ENCODE measurements at regions of chr6 and their contacts with region 1.

Region 1: DNA sequence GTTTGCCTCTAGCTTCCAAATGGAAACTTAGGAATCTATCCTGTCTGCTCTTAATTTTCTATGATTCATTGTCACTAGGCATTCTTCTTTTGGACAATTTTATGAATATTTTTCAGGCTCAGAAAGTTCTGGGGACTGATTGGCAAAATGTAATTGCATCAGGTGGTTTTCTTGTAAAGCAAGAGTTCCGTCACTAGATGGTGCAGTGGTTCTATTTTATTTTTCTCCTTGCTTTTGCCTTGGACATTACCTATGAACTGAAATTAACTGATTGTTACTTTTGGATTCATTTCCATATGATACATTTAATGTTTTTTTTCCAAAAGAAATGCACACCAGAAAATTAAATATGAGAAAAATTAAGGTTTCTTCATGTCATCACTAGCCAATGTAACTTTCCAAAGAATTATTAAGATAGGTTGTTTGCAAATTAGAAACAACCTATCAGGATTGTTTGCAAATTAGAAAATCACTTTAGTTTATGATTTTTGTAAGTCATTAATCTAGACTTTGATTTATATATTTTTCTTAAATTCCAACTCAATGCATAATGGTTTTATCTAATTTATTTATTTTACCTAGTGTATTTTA is 48.0 kb downstream of the TMEM170B start:
- DNase-seq: no peak
- H3K4me3 ChIP-seq: no peak overlapping the region
- H3K27ac ChIP-seq: no peak overlapping the region
- H3K4me1 ChIP-seq: no peaks in the 10 kb centered on the region
- H3K27me3 ChIP-seq: no peaks in the 10 kb centered on the region
- CTCF ChIP-seq: peak in 3 of 4 experiments; percentile 51 to 70 (median 69)
- POLR2A ChIP-seq: no peak

Region 2: GRCh38 chr6:12011276-12012076 is 426.0 kb after region 1 on chr6:
- intact Hi-C with region 1: loop called (anchors 10 kb)
- DNase-seq: peak; percentile 98
- H3K4me3 ChIP-seq: peak overlapping the region; percentile 77 to 84
- H3K27ac ChIP-seq: peak overlapping the region; percentile 96 to 98
- H3K4me1 ChIP-seq: no peaks in the 10 kb centered on the region
- H3K27me3 ChIP-seq: no peaks in the 10 kb centered on the region
- CTCF ChIP-seq: no peak
- POLR2A ChIP-seq: no peak

Region 3: DNA sequence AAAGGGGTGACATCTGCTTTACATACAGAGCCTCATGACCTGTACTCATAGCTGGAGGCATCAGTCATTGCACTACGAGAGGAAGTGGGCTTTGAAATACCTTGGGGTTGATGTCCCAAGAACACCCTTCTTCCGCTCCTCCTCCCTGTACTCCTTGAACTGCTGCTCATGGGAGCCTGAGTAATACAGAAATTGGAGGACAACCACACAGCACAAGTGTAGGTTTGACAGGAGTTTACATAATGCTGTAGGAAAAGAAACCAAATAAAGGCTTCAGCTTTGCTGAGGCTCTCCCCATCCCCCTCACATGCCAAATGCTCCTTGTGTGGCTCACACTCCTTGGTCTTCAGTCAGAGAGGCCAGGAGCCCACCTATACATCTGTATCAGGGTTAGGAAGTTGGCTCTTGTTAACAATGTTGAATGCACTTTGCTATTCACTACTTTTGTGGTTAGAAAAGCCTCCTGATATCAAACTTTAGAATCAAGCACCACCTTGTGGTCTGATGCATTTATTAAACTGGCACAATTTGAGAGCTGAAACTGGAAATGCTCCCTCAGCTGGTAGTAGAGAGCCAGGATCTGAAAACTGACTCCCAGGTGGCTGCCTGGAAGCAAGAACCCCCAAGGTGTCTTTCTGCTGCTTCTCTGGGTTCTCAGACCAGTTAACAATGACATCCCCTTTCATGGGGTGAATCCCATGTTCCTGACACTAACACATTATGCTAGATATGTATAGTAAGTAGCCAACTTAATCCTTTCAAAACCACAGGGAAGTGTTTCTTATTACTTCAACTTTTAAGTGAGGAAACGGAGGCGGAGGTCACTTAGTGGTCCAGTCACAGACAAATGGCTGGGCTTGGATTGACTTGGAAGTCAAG is 648.4 kb after region 1 on chr6:
- intact Hi-C with region 1: loop called (anchors 5 kb)
- DNase-seq: peak; percentile 71
- H3K4me3 ChIP-seq: no peak overlapping the region
- H3K27ac ChIP-seq: no peak overlapping the region
- H3K4me1 ChIP-seq: no peaks in the 10 kb centered on the region
- H3K27me3 ChIP-seq: no peaks in the 10 kb centered on the region
- CTCF ChIP-seq: peak; percentile 40 to 93 (median 86)
- POLR2A ChIP-seq: no peak

Region 4: GRCh38 chr6:12605888-12606345 is 1020.4 kb after region 1 on chr6:
- intact Hi-C with region 1: loop called (anchors 10 kb)
- DNase-seq: peak; percentile 67
- H3K4me3 ChIP-seq: no peak overlapping the region
- H3K27ac ChIP-seq: no peak overlapping the region
- H3K4me1 ChIP-seq: no peaks in the 10 kb centered on the region
- H3K27me3 ChIP-seq: no peaks in the 10 kb centered on the region
- CTCF ChIP-seq: peak; percentile 35 to 75 (median 57)
- POLR2A ChIP-seq: no peak

Measured in prostate gland (tissue), 2 donors.